ENCODE measurements at regions of chr16 and their contacts with region 1.

Region 1: DNA sequence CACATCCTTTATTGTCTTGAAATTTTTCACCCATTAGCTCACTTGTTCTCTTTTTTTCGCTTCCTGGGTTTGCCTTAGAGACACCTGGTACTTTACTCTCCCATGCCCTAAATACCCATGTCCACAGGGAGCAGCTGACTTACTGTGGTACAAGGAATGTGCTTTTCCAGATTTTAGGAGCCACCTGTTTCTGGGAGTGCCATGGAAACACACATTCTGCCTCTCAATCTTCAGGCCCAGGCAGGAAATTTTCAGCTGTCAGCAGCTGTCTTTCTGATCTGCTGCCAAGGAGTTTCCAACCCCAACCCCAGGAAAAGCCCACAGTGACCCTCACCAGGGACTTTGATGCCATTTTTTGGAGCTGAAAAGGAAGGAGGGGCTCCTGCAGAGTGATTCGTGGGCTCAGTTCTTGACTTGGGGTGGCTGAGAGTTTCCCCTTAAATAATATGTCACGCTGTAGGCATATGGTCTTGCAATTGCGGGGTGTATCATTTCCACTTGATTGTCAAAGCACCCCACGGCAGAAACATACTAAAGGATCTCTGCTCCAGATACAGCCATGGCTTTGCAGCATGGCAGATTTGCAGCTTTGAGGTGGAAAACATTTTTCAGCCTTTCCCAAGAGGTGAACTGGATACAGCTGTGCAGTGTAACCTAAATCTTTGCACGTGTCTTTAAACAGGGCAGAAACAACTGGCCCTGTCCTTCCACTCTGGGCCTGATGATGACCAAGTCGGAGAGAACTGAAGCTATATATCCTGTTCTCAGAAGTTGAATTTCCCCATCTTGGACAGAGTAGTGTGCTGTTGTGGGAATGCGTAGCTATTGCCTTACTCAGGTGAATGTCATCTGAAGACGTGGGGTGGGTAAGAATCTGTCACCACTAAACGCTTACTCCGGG is 19.2 kb downstream of the RBFOX1 start:
- DNase-seq: no peak
- ATAC-seq: no peak
- H3K4me3 ChIP-seq: no peak overlapping the region
- H3K4me3 Mint-ChIP-seq: no peak overlapping the region
- H3K27ac ChIP-seq: no peak overlapping the region
- H3K27ac Mint-ChIP-seq: no peak overlapping the region
- H3K4me1 ChIP-seq: no peaks in the 10 kb centered on the region
- H3K4me1 Mint-ChIP-seq: no peaks in the 10 kb centered on the region
- H3K27me3 ChIP-seq: no peaks in the 10 kb centered on the region
- H3K27me3 Mint-ChIP-seq: no peaks in the 10 kb centered on the region

Region 2: DNA sequence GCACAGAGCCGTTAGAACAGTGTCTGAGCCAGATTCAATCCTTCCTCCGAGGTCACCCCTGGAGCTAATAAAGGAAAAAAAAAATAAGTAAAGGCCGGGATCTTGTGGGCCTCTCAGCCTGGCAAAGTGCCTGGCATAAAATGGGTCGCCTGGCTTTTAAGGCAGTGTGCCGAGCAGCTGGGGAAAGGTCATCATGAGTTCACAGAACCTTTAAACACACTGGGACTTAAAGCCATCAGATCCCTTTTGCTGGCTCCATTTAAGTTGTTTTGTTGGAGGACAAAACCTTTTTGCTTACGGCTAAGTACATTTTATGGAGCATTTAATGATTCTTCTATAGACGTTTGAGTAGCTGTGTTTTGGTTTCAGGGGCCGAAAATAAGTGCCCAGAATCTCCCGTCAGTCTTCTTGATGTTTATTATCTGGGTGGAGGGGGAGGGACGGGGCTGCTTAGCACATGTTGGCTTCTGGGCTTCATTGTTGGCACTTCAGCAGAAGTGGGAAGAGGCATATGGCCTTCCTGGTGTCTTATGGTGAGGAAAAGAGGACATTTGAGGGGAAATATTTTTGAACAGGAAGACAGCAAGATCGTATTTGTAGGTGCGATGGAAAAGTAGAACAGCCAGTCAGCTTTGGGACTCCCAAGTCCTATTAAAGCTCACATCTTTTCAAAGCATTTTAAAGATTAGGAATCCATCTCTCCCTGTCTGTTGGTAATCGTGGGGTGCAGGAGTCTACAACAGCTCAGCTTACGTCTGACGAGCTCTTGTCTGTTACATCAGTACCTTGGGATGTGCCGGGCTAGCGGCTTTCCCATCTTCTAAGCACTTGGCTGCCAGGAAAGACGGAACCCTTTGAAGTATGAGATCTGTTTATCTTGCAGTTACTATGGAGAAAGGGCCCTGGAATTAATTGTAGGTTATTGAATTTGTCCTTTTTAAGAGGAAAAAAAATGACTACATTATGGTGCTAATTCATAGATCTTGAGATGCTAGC is 11.9 kb after region 1 on chr16:
- CTCF ChIA-PET with region 1: interaction called in 1 of 2 experiments, 12 read pairs
- POLR2A ChIA-PET with region 1: no interaction called
- DNase-seq: no peak
- ATAC-seq: no peak
- H3K4me3 ChIP-seq: no peak overlapping the region
- H3K4me3 Mint-ChIP-seq: no peak overlapping the region
- H3K27ac ChIP-seq: no peak overlapping the region
- H3K27ac Mint-ChIP-seq: no peak overlapping the region
- H3K4me1 ChIP-seq: no peaks in the 10 kb centered on the region
- H3K4me1 Mint-ChIP-seq: no peaks in the 10 kb centered on the region
- H3K27me3 ChIP-seq: no peaks in the 10 kb centered on the region
- H3K27me3 Mint-ChIP-seq: no peaks in the 10 kb centered on the region

Measured in T-cell (primary cell).